ENCODE measurements at regions of chr19 and their contacts with region 1.

Region 1: GRCh38 chr19:35352448-35353304 is 5.0 kb downstream of the FFAR1 start:
- DNase-seq: peak; percentile 76
- ATAC-seq: peak; percentile 84
- H3K4me3 Mint-ChIP-seq: no peak overlapping the region
- H3K27ac Mint-ChIP-seq: peak overlapping the region; percentile 95
- H3K4me1 Mint-ChIP-seq: peaks cover 5% of the 10 kb centered on the region
- H3K27me3 Mint-ChIP-seq: no peaks in the 10 kb centered on the region
- CTCF ChIP-seq: peak; percentile 58; the same call in 1 of the 2 replicates

Region 2: DNA sequence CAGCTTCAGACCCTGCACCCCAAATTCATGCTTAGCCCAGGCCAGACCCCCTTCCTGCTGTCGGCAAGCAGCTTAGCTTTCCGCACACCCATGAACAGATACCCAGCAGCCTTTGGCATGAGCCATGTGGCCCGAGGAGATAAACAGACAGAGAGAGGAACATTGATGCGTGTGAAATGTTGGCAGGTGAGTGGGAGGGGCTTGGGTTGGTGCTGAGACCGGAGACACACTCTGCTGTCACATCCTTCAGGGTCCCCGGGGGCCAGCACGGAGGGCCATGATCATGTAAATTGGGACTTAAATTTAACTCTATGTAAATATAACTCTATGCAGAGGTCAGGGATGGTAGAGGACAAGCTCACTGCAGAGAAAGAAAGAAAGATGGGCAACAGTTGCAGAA is 22.2 kb before region 1 on chr19:
- CTCF ChIA-PET with region 1: interaction called, 10 read pairs
- POLR2A ChIA-PET with region 1: no interaction called
- DNase-seq: no peak
- ATAC-seq: no peak
- H3K4me3 Mint-ChIP-seq: no peak overlapping the region
- H3K27ac Mint-ChIP-seq: peak overlapping the region; percentile 86; the same call in 1 of the 2 replicates
- H3K4me1 Mint-ChIP-seq: peaks cover 13% of the 10 kb centered on the region
- H3K27me3 Mint-ChIP-seq: no peaks in the 10 kb centered on the region; the same call in 1 of the 2 replicates
- CTCF ChIP-seq: no peak

Region 3: GRCh38 chr19:35363001-35363590 is 10.4 kb after region 1 on chr19:
- CTCF ChIA-PET with region 1: interaction called, 15 read pairs
- POLR2A ChIA-PET with region 1: no interaction called
- DNase-seq: no peak
- ATAC-seq: no peak
- H3K4me3 Mint-ChIP-seq: no peak overlapping the region
- H3K27ac Mint-ChIP-seq: no peak overlapping the region
- H3K4me1 Mint-ChIP-seq: peaks cover 2% of the 10 kb centered on the region; the same call in 1 of the 2 replicates
- H3K27me3 Mint-ChIP-seq: peaks cover 4% of the 10 kb centered on the region; the same call in 1 of the 2 replicates
- CTCF ChIP-seq: no peak

Region 4: GRCh38 chr19:35395382-35396199 is 42.9 kb after region 1 on chr19:
- CTCF ChIA-PET with region 1: no interaction called
- POLR2A ChIA-PET with region 1: no interaction called
- DNase-seq: peak; percentile 24
- ATAC-seq: peak; percentile 57
- H3K4me3 Mint-ChIP-seq: no peak overlapping the region
- H3K27ac Mint-ChIP-seq: no peak overlapping the region
- H3K4me1 Mint-ChIP-seq: no peaks in the 10 kb centered on the region
- H3K27me3 Mint-ChIP-seq: no peaks in the 10 kb centered on the region
- CTCF ChIP-seq: no peak

Region 5: GRCh38 chr19:35484252-35485036 is 131.8 kb after region 1 on chr19:
- CTCF ChIA-PET with region 1: interaction called, 19 read pairs
- POLR2A ChIA-PET with region 1: no interaction called
- DNase-seq: no peak
- ATAC-seq: no peak
- H3K4me3 Mint-ChIP-seq: no peak overlapping the region
- H3K27ac Mint-ChIP-seq: no peak overlapping the region
- H3K4me1 Mint-ChIP-seq: no peaks in the 10 kb centered on the region
- H3K27me3 Mint-ChIP-seq: peaks cover 14% of the 10 kb centered on the region
- CTCF ChIP-seq: no peak